ENCODE measurements at regions of chr21 and their contacts with region 1.

Region 1: GRCh38 chr21:38165466-38166172 is 91.2 kb upstream of the KCNJ15 start:
- DNase-seq: peak; percentile 23
- H3K4me3 ChIP-seq: no peak overlapping the region
- H3K27ac ChIP-seq: no peak overlapping the region
- H3K4me1 ChIP-seq: peaks cover 10% of the 10 kb centered on the region
- H3K27me3 ChIP-seq: no peaks in the 10 kb centered on the region

Region 2: GRCh38 chr21:37986727-37987399 is 178.8 kb before region 1 on chr21:
- in situ Hi-C with region 1: no loop called
- DNase-seq: no peak
- H3K4me3 ChIP-seq: no peak overlapping the region
- H3K27ac ChIP-seq: no peak overlapping the region
- H3K4me1 ChIP-seq: no peaks in the 10 kb centered on the region
- H3K27me3 ChIP-seq: peaks cover 22% of the 10 kb centered on the region

Region 3: DNA sequence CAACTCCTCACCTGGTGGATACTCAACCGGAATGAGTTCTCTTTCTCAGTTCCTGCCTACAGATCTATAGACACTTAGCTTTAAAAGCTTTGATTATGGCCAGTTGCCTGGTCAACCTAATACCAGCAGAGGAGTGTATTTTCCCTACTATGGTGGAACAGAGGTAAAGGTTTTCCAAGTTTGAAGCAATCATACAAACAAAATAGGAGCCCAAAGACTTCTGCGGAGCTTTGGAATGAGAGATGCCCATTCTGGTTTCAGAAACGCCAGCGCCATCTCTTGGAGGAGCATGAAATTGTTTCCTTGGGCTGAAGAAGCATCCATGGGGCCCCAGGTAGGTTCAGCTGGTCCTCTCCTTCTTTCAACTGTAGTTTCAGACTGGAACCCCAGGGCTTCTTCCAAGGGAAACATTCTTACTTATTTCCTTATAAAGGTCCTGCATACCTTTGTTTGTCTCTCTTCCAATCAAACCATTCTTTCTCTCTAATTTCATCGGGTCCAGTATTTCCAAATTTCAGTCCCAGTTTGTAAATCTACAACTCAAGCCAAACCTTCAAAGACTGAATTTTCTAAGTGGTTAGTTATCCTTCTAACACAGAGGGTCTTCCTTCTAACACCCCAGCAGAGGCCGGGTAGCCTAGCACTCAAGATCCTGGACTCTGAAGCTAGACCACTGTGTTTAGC is 187.1 kb after region 1 on chr21:
- in situ Hi-C with region 1: loop called (anchors 5 kb)
- DNase-seq: peak; percentile 89
- H3K4me3 ChIP-seq: peak overlapping the region; percentile 25; the same call in 1 of the 2 replicates
- H3K27ac ChIP-seq: peak overlapping the region; percentile 82
- H3K4me1 ChIP-seq: peaks cover 23% of the 10 kb centered on the region
- H3K27me3 ChIP-seq: no peaks in the 10 kb centered on the region